CD4-positive, alpha-beta T cell (primary cell): ENCODE measurements at regions of chrX and their contacts with region 1.

Region 1: DNA sequence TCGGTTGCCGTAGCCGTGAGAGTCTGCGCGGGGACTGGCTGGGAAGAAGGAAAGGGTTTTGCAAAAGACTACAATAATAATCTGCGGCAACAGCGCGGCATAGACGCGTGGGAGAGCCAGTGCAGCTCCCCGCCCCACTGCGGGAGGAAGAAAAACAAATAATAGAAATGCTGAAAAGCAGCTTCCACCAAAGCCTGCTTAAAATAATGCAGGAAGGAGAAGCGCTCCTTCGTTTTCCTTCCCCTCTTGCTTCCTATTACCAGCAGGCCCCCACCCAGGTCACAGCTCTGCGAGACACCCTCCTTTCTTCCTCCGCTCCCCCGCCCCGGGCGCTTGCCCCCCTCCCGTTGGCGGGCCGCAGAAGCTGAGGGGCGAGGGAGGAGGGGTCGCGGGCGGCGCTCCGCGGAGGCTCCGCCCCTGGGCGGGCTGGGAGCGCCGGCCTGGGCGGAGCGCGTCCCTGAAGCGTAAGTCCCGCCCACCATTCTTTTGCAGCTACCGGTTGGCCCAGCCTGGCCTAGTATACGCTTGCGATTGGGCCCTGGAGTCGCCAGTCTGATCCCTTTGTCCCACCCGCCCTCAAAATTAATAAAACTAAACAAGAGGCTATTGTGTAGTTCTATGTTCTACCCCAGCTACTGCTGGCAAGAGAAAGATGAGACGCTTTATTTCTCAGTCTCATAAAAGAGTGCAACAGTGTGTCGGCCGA is 636 bp upstream of the AMOT start:
- DNase-seq: peak; percentile 47 to 91 (median 70)
- ATAC-seq: peak; percentile 94
- H3K4me3 ChIP-seq: peak overlapping the region; percentile 81
- H3K4me3 Mint-ChIP-seq: peak overlapping the region; percentile 94
- H3K27ac ChIP-seq: peak overlapping the region in 1 of 2 donors; percentile 29
- H3K27ac Mint-ChIP-seq: peak overlapping the region; percentile 73
- H3K4me1 ChIP-seq: peaks cover 9% of the 10 kb centered on the region
- H3K4me1 Mint-ChIP-seq: peaks cover 16% of the 10 kb centered on the region
- H3K27me3 ChIP-seq: no peaks in the 10 kb centered on the region
- H3K27me3 Mint-ChIP-seq: no peaks in the 10 kb centered on the region
- CTCF ChIP-seq: no peak

Region 2: GRCh38 chrX:111680988-111681779 is 1160.1 kb before region 1 on chrX and contains the start of gene ALG13:
- CTCF ChIA-PET with region 1: no interaction called
- POLR2A ChIA-PET with region 1: interaction called, 7 read pairs
- intact Hi-C with region 1: loop called in 1 of 2 experiments (anchors 10 kb)
- DNase-seq: peak; percentile 79 to 96 (median 85)
- ATAC-seq: peak; percentile 88
- H3K4me3 ChIP-seq: peak within 1 kb of the TSS; percentile 97
- H3K4me3 Mint-ChIP-seq: peak within 1 kb of the TSS; percentile 97
- H3K27ac ChIP-seq: peak within 1 kb of the TSS; percentile 95 to 100
- H3K27ac Mint-ChIP-seq: peak within 1 kb of the TSS; percentile 99
- H3K4me1 ChIP-seq: peaks cover 18% of the 10 kb centered on the region
- H3K4me1 Mint-ChIP-seq: peaks cover 48% of the 10 kb centered on the region
- H3K27me3 ChIP-seq: no peaks in the 10 kb centered on the region
- H3K27me3 Mint-ChIP-seq: no peaks in the 10 kb centered on the region
- CTCF ChIP-seq: peak; percentile 64
- total RNA-seq, gene ALG13: 82.2 to 86.2 TPM

Region 3: GRCh38 chrX:112678831-112679230 is 162.4 kb before region 1 on chrX:
- CTCF ChIA-PET with region 1: no interaction called
- POLR2A ChIA-PET with region 1: interaction called, 10 read pairs
- intact Hi-C with region 1: loop called in 1 of 2 experiments (anchors 5 kb)
- DNase-seq: peak in 1 of 14 experiments; percentile 9
- ATAC-seq: no peak
- H3K4me3 ChIP-seq: peak overlapping the region; percentile 59
- H3K4me3 Mint-ChIP-seq: peak overlapping the region; percentile 89
- H3K27ac ChIP-seq: peak overlapping the region in 1 of 2 donors; percentile 64
- H3K27ac Mint-ChIP-seq: peak overlapping the region; percentile 89
- H3K4me1 ChIP-seq: peaks cover 12% of the 10 kb centered on the region
- H3K4me1 Mint-ChIP-seq: peaks cover 44% of the 10 kb centered on the region
- H3K27me3 ChIP-seq: no peaks in the 10 kb centered on the region
- H3K27me3 Mint-ChIP-seq: no peaks in the 10 kb centered on the region
- CTCF ChIP-seq: no peak

Region 4: GRCh38 chrX:113009029-113009428 is 167.8 kb after region 1 on chrX:
- CTCF ChIA-PET with region 1: no interaction called
- POLR2A ChIA-PET with region 1: no interaction called
- intact Hi-C with region 1: no loop called
- DNase-seq: no peak
- ATAC-seq: no peak
- H3K4me3 ChIP-seq: no peak overlapping the region
- H3K4me3 Mint-ChIP-seq: no peak overlapping the region
- H3K27ac ChIP-seq: no peak overlapping the region
- H3K27ac Mint-ChIP-seq: no peak overlapping the region
- H3K4me1 ChIP-seq: no peaks in the 10 kb centered on the region
- H3K4me1 Mint-ChIP-seq: no peaks in the 10 kb centered on the region
- H3K27me3 ChIP-seq: no peaks in the 10 kb centered on the region
- H3K27me3 Mint-ChIP-seq: no peaks in the 10 kb centered on the region
- CTCF ChIP-seq: no peak